ENCODE measurements at regions of chr2 and their contacts with region 1.

Region 1: DNA sequence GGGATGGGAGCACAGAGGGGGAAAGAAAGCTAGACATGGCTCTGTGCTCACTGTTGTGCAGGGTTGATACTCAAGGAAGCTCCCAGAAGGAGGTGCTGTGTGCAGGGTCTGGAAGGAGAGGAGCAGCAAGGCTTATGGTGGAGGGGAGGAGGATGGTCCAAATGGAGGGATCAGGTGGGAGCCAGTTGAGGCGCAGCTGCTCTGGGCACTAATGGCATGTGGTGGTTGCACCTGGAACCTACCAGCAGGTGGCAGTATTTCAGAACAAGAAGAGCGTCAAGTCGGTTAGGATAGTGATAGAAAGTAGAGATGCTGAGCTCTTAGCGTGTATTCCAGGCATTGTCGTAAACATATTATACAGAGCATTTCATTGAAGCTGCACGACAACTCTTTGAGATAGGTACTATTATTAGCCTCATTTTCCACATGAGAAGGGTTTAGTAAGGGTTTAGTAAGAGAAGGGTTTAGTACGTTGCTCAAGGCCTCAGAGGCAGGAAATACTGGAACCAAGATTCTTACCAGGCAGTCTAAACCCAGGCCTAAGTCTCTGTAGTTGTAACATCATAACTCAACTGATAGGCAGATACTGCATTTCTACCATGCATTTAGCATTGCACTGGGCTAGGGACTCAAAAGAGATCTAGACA is 223.7 kb downstream of the CYP26B1 start:
- DNase-seq: peak; percentile 72
- ATAC-seq: peak; percentile 93
- H3K4me3 ChIP-seq: no peak overlapping the region
- H3K27ac ChIP-seq: no peak overlapping the region
- H3K4me1 ChIP-seq: peaks cover 0 to 7% of the 10 kb centered on the region in 2 experiments; a peak in 1 of 4 replicates
- H3K27me3 ChIP-seq: no peaks in the 10 kb centered on the region
- CTCF ChIP-seq: peak; percentile 80 to 92 (median 88)
- POLR2A ChIP-seq: no peak
- RAD21 ChIP-seq: peak; percentile 87

Region 2: DNA sequence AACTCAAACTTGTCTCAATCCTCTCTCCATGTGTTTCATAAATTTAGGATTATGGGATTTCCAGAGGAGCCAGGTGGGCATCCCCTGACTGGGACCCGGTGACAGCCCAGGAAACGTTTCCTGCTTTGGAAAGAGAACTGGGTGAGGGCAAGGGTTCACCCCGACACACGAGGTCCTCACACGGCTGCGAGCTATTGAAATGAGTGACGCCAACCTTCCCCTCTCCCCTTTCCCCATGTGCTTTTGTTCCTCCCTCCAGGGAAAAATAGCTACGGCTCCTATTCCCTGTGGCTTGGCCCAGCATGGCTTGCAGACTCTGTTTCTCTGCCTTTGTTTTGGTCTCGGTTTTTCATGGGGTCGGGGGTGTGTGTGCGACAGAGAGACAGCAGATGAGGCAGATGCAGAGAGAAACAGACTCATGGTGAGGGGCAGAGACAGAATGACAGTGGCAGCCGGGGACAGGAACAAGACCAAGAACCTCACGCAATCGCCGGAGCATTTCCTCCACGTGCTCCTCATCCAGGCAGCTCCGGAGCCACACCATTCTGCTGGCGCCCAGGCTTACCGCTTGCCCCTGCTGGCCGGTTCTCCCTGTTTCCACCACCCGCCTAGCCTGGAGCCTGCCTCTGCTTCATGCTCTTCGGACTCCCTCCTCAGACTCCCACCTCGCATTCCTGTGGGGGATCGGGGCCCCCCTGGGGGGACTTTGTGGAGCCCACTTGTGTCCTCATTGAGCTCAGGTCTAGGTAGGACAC is 232.1 kb before region 1 on chr2:
- CTCF ChIA-PET with region 1: no interaction called
- POLR2A ChIA-PET with region 1: no interaction called
- RAD21 ChIA-PET with region 1: no interaction called
- intact Hi-C with region 1: no loop called
- DNase-seq: no peak
- ATAC-seq: no peak
- H3K4me3 ChIP-seq: no peak overlapping the region
- H3K27ac ChIP-seq: no peak overlapping the region
- H3K4me1 ChIP-seq: no peaks in the 10 kb centered on the region
- H3K27me3 ChIP-seq: peaks cover 4% of the 10 kb centered on the region; the same call in 1 of the 2 replicates
- CTCF ChIP-seq: no peak
- POLR2A ChIP-seq: no peak
- RAD21 ChIP-seq: no peak

Region 3: GRCh38 chr2:71995067-71995665 is 71.2 kb after region 1 on chr2:
- CTCF ChIA-PET with region 1: interaction called, 16 read pairs
- POLR2A ChIA-PET with region 1: no interaction called
- RAD21 ChIA-PET with region 1: no interaction called
- intact Hi-C with region 1: no loop called
- DNase-seq: peak; percentile 27
- ATAC-seq: peak; percentile 88
- H3K4me3 ChIP-seq: no peak overlapping the region
- H3K27ac ChIP-seq: no peak overlapping the region
- H3K4me1 ChIP-seq: no peaks in the 10 kb centered on the region
- H3K27me3 ChIP-seq: no peaks in the 10 kb centered on the region
- CTCF ChIP-seq: peak; percentile 49 to 99 (median 67)
- POLR2A ChIP-seq: no peak
- RAD21 ChIP-seq: peak; percentile 83

Region 4: DNA sequence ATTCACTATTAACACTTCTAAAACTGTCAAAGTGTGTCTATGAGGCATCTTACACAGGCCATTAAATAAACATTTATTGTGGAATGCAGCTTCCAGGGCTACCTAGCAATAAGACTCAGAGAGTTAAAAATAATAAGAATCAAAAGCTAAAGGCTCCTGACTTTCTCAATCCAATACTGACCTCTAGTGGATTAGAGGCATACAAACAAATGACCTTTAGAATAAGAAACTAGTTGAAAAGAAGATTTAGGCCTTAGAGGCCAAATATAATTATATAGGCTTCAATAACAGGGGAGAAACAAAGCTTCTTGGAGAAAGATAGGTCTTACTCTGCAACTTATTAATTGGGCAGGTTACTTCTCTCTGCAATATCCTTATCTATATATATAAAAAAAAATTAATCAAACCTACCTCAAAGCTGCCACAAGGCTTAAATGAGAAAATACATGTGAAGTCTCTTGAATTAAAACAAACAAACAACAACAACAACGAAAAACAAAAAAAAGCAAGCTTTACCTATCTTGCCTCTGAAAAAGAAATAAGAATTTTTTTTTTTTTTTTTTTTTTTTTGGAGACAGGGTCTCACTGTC is 655.7 kb after region 1 on chr2:
- CTCF ChIA-PET with region 1: interaction called, 15 read pairs
- POLR2A ChIA-PET with region 1: no interaction called
- RAD21 ChIA-PET with region 1: interaction called in 1 of 2 experiments, 3 read pairs
- intact Hi-C with region 1: loop called (anchors 5 kb)
- DNase-seq: peak; percentile 26
- ATAC-seq: peak; percentile 50; the same call in 1 of the 2 replicates
- H3K4me3 ChIP-seq: no peak overlapping the region
- H3K27ac ChIP-seq: no peak overlapping the region
- H3K4me1 ChIP-seq: no peaks in the 10 kb centered on the region
- H3K27me3 ChIP-seq: no peaks in the 10 kb centered on the region
- CTCF ChIP-seq: peak; percentile 54 to 76 (median 74); a peak in 5 of 6 replicates
- POLR2A ChIP-seq: no peak
- RAD21 ChIP-seq: peak; percentile 87

Region 5: DNA sequence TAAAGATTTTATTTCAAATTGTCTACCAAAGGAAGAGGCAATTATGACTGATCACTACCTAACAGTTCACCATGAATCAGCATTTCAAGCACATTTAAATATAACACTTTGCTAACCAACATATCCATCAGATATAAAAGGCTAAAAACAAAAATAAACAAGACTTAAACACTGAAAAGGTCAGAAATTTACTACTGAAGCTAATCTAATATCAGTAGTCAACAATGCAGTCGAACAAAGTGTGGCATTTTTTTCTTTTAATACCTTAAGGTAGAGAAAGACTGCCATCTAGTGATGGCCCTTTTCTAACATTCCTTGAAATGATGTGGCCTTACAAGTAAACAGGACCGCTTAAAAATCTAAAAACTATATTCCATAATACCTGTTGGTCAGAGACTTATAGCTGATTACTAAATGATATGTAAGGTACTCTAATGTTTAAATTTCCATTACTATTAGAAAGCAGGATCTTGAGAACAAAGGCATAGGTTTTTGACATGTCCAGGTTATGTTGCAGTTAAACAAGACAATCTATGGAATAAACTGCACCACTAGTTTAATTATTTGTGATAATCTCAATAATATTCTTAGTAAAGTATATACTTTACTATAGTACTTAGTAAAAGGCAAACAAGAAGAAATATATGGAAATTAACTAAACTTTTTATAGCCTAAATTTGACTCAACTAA is 821.8 kb after region 1 on chr2:
- CTCF ChIA-PET with region 1: interaction called, 6 read pairs
- POLR2A ChIA-PET with region 1: no interaction called
- RAD21 ChIA-PET with region 1: no interaction called
- intact Hi-C with region 1: loop called (anchors 5 kb)
- DNase-seq: peak; percentile 48
- ATAC-seq: peak; percentile 50
- H3K4me3 ChIP-seq: no peak overlapping the region
- H3K27ac ChIP-seq: no peak overlapping the region
- H3K4me1 ChIP-seq: peaks cover 0 to 3% of the 10 kb centered on the region in 2 experiments; a peak in 1 of 4 replicates
- H3K27me3 ChIP-seq: no peaks in the 10 kb centered on the region
- CTCF ChIP-seq: peak; percentile 50 to 85 (median 59); a peak in 5 of 6 replicates
- POLR2A ChIP-seq: no peak
- RAD21 ChIP-seq: peak; percentile 79

Measured in HCT116 (cell line).